Tibial artery (tissue), 4 donors: ENCODE measurements at regions of chr2 and their contacts with region 1.

Region 1: DNA sequence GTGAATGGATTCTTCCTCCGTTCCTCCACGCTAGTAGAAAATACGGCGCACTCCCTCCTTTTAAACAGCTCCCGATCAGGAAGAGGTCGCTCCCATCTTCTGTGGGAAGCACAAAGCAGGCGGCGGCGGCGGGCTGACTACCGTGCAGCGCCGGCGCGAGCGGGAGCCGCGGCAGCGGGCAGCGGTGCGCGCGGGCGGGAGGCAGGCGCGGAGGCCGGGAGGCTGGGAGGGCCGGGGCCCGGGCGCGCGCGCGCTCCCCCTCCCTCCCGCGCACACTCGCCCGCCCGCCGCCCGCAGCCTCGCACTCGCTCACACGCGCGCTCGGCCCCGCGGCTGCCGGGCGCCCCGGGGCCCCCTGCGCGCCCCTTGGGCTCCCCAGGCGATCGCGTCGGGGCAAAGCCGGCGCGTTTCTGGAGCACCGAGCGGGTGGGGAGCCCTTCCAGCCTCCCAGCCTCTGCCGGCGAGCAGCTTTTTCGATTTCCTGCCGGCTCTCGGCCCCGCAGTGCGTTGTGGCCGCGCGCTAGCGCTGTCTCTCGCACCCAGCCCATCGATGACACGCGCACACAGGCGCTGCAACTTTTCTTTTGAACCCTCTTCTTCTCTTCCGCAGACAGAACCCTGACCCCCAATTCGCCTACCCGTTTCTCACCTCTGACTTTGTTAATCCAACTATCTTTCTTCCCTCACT is at the start of gene SLC8A1:
- DNase-seq: peak in 1 of 2 donors; percentile 67
- H3K4me3 ChIP-seq: peak within 1 kb of the TSS; percentile 65 to 84
- H3K27ac ChIP-seq: peak within 1 kb of the TSS; percentile 64 to 81
- H3K4me1 ChIP-seq: peaks cover 0 to 25% (median 5%) of the 10 kb centered on the region in 4 donors
- H3K27me3 ChIP-seq: no peaks in the 10 kb centered on the region
- CTCF ChIP-seq: no peak

Region 2: GRCh38 chr2:40511661-40512213 is 59.7 kb after region 1 on chr2:
- intact Hi-C with region 1: loop called (anchors 10 kb)
- DNase-seq: peak in 1 of 2 donors; percentile 42
- H3K4me3 ChIP-seq: peak overlapping the region; percentile 47 to 56
- H3K27ac ChIP-seq: peak overlapping the region; percentile 70 to 72
- H3K4me1 ChIP-seq: peaks cover 0 to 29% (median 6%) of the 10 kb centered on the region in 4 donors
- H3K27me3 ChIP-seq: no peaks in the 10 kb centered on the region
- CTCF ChIP-seq: no peak